Mammary epithelial cell (primary cell): ENCODE measurements at regions of chr9 and their contacts with region 1.

Region 1: DNA sequence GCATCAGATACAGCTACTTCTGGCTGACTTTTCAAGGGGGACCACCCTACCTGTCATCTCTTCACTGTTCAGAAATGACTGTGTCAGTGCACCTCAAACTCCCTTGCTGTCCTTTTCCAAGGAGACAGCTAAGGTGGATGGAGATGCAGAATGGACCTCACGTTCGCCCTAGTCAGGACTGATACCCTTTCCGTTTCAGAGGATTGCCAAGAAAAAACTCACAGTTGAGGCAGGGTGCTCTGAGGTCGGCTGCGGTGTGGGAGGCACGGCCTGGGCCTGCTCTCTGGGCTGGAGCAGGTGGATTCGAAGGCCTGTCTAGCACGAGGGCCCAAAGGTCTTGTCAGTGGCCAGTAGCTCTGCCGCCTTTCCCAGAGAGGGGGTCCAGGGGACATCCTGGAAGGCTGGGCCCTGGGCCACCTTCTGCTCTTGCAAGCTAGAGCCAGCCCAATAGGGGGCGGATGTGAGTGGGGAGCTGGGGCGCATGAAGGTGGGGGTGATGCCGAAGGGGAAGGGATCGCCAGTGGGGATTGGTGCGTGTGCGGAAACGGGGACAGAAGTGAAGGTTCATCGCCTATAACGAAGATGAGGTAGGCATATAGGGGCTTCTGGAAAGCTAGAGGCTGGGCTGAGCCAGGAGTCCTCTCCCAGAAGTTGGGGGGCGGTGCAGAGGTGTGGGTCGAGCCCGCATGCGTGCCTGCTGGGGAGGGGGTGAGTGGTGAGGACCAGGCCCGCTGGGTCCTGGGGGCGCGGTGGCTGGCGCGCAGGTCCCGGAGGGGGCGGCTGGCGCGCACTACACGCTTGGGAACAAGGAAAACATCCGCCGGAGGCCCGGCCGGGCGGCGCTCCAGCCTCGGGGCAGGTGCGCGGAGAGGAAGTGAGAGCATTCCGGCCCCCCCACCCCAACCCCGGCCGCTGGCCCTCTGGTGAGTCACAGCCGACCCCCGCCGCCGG is 2.5 kb upstream of the MSMP start:
- DNase-seq: peak; percentile 23
- H3K4me3 ChIP-seq: peak overlapping the region; percentile 55 to 70 (median 64)
- H3K27ac ChIP-seq: no peak overlapping the region
- H3K4me1 ChIP-seq: peaks cover 24% of the 10 kb centered on the region
- H3K27me3 ChIP-seq: no peaks in the 10 kb centered on the region
- CTCF ChIP-seq: peak; percentile 48 to 77

Region 2: GRCh38 chr9:35313916-35314315 is 442.6 kb before region 1 on chr9:
- CTCF ChIA-PET with region 1: no interaction called
- dilution Hi-C with region 1: no loop called
- in situ Hi-C with region 1: no loop called
- intact Hi-C with region 1: no loop called
- DNase-seq: no peak
- H3K4me3 ChIP-seq: no peak overlapping the region
- H3K27ac ChIP-seq: no peak overlapping the region
- H3K4me1 ChIP-seq: no peaks in the 10 kb centered on the region
- H3K27me3 ChIP-seq: no peaks in the 10 kb centered on the region
- CTCF ChIP-seq: no peak

Region 3: DNA sequence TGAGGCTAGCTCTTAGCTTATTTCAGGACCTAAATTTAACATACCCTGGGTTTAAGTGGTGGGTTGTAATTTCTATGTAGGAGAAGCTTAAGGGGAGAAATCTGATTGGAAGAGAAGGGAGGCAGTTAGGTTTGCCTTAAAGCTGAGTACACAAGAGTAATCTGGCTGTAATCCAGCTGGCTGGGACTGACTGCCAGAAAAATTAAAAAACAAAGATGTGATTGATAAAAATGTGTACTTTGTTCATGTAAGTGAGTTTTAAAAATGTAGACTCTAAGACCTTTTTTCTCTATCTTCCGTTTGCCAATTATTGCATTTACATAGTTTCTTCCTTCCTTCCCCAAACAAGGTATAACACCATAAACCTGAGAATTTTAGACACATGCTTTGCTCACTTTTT is 15.0 kb after region 1 on chr9:
- CTCF ChIA-PET with region 1: no interaction called
- dilution Hi-C with region 1: no loop called
- in situ Hi-C with region 1: no loop called
- intact Hi-C with region 1: loop called (anchors 2 kb)
- DNase-seq: peak; percentile 17
- H3K4me3 ChIP-seq: no peak overlapping the region
- H3K27ac ChIP-seq: no peak overlapping the region
- H3K4me1 ChIP-seq: peaks cover 14% of the 10 kb centered on the region
- H3K27me3 ChIP-seq: no peaks in the 10 kb centered on the region
- CTCF ChIP-seq: no peak

Region 4: GRCh38 chr9:35869621-35870216 is 113.2 kb after region 1 on chr9:
- CTCF ChIA-PET with region 1: no interaction called
- dilution Hi-C with region 1: loop called (anchors 5 kb)
- in situ Hi-C with region 1: no loop called
- intact Hi-C with region 1: no loop called
- DNase-seq: peak; percentile 59
- H3K4me3 ChIP-seq: no peak overlapping the region
- H3K27ac ChIP-seq: no peak overlapping the region
- H3K4me1 ChIP-seq: peaks cover 22% of the 10 kb centered on the region
- H3K27me3 ChIP-seq: no peaks in the 10 kb centered on the region
- CTCF ChIP-seq: peak in 1 of 2 donors; percentile 17